ENCODE measurements at regions of chr2 and their contacts with region 1.

Region 1: GRCh38 chr2:28429636-28430376 is 37.1 kb downstream of the FOSL2 start:
- DNase-seq: no peak
- ATAC-seq: no peak
- H3K4me3 ChIP-seq: no peak overlapping the region
- H3K27ac ChIP-seq: no peak overlapping the region
- H3K4me1 ChIP-seq: no peaks in the 10 kb centered on the region
- H3K27me3 ChIP-seq: no peaks in the 10 kb centered on the region
- CTCF ChIP-seq: no peak

Region 2: GRCh38 chr2:27989141-27989540 is 440.7 kb before region 1 on chr2:
- CTCF ChIA-PET with region 1: no interaction called
- POLR2A ChIA-PET with region 1: interaction called, 11 read pairs
- intact Hi-C with region 1: no loop called
- DNase-seq: no peak
- ATAC-seq: no peak
- H3K4me3 ChIP-seq: no peak overlapping the region
- H3K27ac ChIP-seq: no peak overlapping the region
- H3K4me1 ChIP-seq: peaks cover 19% of the 10 kb centered on the region
- H3K27me3 ChIP-seq: no peaks in the 10 kb centered on the region
- CTCF ChIP-seq: no peak